RWPE1 (cell line): ENCODE measurements at regions of chr12 and their contacts with region 1.

Region 1: DNA sequence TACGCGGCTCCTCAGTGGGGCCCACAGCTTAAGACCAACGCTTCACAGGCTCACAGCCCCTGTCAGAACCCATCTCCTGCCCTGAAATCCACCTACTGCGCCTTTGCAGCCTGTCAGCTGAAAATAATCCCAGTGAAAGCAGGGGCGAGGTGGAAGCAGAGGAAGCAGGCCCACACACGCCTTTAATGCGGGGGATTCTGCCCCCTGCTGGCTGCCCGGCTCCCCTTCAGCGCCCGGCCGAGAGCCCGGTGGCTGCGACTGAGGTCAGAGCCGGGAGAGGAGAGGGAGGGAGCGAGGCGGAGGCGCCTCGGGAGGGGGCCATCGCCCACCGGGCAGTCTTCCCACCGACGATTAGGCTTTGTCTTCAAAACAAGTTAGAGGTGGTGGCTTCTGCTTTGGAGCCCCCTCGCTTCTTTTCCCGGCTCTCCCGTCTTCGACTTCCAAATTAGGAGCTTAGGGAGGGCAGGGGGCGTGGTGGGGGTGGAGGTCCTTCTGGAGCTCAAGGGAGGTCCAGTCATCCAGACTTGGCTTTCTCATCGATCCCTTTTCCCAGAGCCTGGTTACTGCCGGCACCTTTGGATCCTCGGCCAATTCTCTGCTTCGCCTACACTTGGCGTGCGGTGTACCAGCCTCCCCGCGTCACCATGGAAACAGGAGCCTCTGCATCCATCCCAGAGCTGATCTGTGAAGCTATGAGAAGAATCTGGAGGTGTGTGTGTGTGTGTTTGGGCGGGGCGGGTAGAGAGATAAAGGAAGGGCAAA is 25.2 kb upstream of the RND1 start:
- DNase-seq: peak; percentile 40
- H3K27ac ChIP-seq: no peak overlapping the region
- CTCF ChIP-seq: peak; percentile 75

Region 2: DNA sequence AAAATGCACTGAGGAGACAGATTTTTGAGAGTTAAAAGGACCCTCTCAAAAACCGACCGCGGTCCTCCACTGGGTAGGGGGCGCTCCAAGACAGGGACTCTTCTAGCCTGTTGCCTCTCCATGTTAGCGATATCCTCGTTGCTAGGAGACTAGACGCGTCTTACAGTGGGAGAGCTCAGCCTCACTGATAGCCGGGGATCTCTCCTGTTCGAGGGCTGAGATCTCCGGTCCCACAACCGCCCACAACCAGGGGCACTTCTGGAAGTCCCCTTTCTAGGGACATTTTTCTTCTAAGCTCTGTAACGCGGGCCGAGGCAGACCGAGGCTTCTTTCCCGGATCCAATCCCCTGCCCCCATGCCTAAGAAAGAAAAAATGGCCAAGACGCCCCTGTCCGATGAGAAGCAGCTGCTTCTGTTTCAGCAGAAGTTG is 13.2 kb after region 1 on chr12:
- CTCF ChIA-PET with region 1: interaction called, 10 read pairs
- POLR2A ChIA-PET with region 1: no interaction called
- DNase-seq: peak; percentile 55
- H3K27ac ChIP-seq: no peak overlapping the region
- CTCF ChIP-seq: 0 out of 2 replicates have a peak, but pooled peaks have one; percentile 14

Region 3: DNA sequence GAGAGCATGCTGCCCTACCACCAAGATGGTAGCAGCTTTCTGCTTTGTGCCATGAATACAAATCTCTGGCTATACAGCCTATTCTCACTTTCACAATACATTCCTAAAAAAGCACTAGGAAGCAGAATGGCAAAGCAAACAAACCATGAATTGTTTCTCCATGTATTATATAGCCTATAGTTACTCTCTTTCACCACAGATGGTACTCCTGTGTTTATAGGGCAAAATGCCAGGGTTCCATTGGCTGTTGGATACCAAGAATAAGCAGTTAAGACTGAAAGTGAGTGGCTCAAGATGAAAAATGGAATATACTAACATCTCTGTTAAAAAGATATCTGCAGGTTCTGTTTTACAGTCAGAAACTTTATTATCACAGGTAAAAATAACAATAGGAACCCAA is 55.4 kb after region 1 on chr12:
- CTCF ChIA-PET with region 1: no interaction called
- POLR2A ChIA-PET with region 1: no interaction called
- DNase-seq: no peak
- H3K27ac ChIP-seq: no peak overlapping the region
- CTCF ChIP-seq: no peak